Thyroid gland (tissue), 4 donors: ENCODE measurements at regions of chr3 and their contacts with region 1.

Region 1: DNA sequence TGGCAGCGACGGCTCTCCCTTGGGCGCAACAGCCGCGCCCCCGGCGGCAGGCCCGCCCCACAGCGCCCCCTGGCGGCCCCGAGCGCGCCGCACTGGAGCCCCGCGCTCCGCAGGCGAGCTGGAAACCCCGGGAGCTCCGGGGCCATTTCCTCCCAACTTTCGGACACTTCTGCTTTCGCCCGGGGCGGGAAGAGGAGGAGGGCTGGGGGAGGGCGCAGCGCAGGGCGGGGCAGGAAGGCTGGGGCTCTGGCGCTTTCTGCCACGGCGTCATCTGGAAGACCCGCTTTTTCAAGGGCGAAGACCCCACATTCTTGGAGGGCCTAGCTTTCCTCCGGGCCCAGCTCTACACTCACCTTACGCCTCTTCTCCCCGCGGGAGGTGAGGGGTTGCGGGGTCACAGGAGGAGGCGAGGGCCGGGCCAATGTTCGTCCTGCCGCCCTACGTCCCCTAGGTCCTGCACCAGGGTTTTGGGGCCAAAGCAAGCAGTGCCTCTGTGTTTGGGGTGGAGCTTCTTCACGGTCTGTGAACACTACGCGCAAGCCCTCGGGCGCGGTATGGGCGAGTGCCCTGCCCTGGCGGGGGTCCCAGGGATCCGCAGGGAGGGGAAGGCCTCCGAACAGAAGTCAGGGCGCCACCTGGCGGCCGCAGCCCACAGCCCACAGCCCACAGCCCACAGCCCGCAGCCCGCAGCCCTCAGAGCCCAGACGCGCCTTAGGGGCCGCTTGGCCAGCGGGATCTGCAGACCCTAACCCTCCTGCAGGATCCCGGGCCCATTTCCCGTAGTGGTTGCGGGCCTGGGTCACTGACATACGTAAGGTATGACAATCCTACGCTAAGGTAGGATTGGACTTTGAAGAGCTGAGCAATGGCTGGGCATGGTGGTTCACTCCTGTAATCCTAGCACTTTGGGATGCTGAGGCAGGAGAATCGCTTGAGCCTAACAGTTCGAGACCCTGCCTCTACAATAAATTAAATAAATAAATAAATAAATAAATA is 31.1 kb downstream of the FOXL2 start:
- DNase-seq: peak; percentile 98 to 99
- H3K4me3 ChIP-seq: peak overlapping the region in 2 of 3 donors; percentile 20 to 41
- H3K27ac ChIP-seq: peak overlapping the region; percentile 89 to 95 (median 93)
- H3K4me1 ChIP-seq: peaks cover 11 to 22% of the 10 kb centered on the region in 2 donors
- H3K27me3 ChIP-seq: no peaks in the 10 kb centered on the region
- CTCF ChIP-seq: peak; percentile 83 to 96 (median 93)
- POLR2A ChIP-seq: peak in 1 of 2 donors; percentile 70

Region 2: GRCh38 chr3:138455801-138456716 is 459.7 kb before region 1 on chr3:
- intact Hi-C with region 1: no loop called
- DNase-seq: peak; percentile 70 to 78
- H3K4me3 ChIP-seq: no peak overlapping the region
- H3K27ac ChIP-seq: no peak overlapping the region
- H3K4me1 ChIP-seq: peaks cover 0 to 14% of the 10 kb centered on the region in 2 donors
- H3K27me3 ChIP-seq: no peaks in the 10 kb centered on the region
- CTCF ChIP-seq: no peak
- POLR2A ChIP-seq: no peak

Region 3: GRCh38 chr3:138594935-138595610 is 320.7 kb before region 1 on chr3:
- intact Hi-C with region 1: loop called (anchors 5 kb)
- DNase-seq: no peak
- H3K4me3 ChIP-seq: no peak overlapping the region
- H3K27ac ChIP-seq: peak overlapping the region in 1 of 3 donors; percentile 92
- H3K4me1 ChIP-seq: peaks cover 5 to 16% of the 10 kb centered on the region in 2 donors
- H3K27me3 ChIP-seq: no peaks in the 10 kb centered on the region
- CTCF ChIP-seq: no peak
- POLR2A ChIP-seq: no peak

Region 4: DNA sequence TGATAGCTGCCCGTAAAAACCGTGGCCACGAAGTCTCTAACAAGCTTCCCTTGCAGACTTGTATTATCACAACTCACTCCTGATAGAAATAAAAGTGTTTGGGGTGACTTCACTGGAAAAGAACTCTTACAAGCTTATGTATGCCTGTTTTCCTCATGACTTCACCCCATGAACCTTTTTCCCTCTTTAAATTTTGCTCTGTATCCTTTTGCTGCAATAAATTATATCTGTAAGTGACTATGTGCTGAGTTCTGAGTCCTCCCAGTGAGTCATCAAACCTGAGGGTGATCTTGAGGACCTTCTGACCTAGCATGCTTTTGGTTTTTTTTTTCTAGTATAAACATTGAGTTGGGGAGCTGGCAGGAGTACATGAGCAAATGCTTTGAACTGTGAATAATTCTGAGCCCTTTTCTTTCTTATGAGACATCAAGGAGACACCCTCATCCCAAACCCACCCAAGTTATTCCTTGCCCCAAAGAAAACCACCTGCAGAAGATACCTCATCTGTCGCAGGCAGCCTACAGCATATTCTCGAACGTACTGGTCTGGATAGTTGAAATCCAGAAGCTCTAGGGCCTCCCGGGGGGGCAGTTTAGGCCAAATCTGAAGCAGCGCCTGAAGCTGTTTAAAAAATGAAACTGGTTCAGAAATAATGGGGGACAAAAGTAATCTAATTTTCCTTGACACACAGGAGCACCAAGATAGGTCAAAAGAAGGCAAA is 221.4 kb before region 1 on chr3:
- intact Hi-C with region 1: loop called (anchors 5 kb)
- DNase-seq: peak; percentile 36 to 48
- H3K4me3 ChIP-seq: no peak overlapping the region
- H3K27ac ChIP-seq: peak overlapping the region; percentile 77 to 90 (median 82)
- H3K4me1 ChIP-seq: peaks cover 17 to 25% of the 10 kb centered on the region in 2 donors
- H3K27me3 ChIP-seq: no peaks in the 10 kb centered on the region
- CTCF ChIP-seq: no peak
- POLR2A ChIP-seq: no peak

Region 5: DNA sequence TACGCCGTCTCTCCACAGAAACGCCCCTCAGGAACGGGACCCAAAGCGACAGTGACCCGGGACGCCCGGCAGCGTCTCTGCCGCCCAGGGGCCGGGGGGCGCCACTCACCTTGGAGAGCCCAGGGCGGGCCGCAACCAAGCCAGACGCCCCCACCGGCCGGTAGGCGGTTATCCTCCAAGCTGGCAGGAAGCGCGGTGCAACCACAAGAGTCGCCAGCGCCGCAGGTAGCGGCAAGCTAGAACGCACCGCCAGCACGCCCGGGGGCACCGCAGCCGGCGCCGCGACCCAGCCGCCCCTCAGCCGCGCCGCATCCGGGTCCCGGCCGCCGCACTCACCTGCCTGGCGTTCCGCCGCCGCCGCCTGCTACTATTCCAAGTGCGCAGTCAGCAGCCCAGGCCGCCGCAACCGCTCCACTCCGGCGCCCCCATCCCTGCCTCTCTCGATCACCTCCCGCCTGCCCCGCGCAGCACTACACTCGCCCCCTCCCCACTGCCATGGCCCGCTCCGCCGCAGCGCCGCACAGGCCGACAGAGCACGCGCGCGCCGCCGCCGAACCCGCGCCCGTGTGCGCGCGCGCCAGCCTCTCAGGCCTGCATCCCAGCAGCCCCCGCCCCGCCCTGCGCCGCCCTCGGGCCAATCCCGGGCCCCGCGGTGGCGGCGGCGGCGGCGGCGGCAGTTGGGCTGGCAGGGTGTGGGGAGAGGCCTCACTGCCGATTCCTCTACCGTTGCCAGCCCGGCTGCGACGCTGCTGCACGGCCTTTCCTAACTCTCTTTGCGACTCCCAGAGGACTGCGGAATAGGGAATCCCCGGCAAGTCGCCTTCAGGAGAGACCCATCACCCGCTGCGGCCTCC is 81.2 kb before region 1 on chr3 and contains the start of gene PIK3CB:
- intact Hi-C with region 1: loop called (anchors 10 kb)
- DNase-seq: peak; percentile 93 to 94
- H3K4me3 ChIP-seq: peak within 1 kb of the TSS; percentile 41 to 85 (median 70)
- H3K27ac ChIP-seq: peak within 1 kb of the TSS; percentile 88 to 98 (median 95)
- H3K4me1 ChIP-seq: peaks cover 22 to 24% of the 10 kb centered on the region in 2 donors
- H3K27me3 ChIP-seq: no peaks in the 10 kb centered on the region
- CTCF ChIP-seq: peak in 3 of 6 experiments; percentile 4 to 34 (median 30)
- POLR2A ChIP-seq: peak; percentile 45 to 98
- total RNA-seq, gene PIK3CB: 60.2 to 90.0 (median 78.5) TPM

Region 6: DNA sequence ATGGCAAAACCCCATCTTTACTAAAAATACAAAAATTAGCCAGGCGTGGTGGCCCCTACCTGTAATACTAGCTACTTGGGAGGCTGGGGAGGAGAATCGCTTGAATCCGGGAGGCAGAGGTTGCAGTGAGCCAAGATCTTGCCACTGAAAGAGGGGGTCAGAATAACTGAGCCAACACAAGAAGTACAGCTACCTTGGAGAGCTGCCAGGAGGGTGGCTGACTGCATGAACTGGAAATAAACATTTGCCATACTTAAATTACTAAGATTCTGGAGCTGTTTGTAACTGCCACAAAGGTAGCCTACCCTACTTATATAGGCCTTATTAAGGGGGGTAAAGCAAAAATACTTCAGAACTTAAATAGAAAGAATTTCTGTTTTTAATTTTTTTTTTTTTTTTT is 65.7 kb before region 1 on chr3:
- intact Hi-C with region 1: no loop called
- DNase-seq: peak; percentile 66 to 75
- H3K4me3 ChIP-seq: no peak overlapping the region
- H3K27ac ChIP-seq: peak overlapping the region in 2 of 3 donors; percentile 56 to 61
- H3K4me1 ChIP-seq: peaks cover 22 to 28% of the 10 kb centered on the region in 2 donors
- H3K27me3 ChIP-seq: no peaks in the 10 kb centered on the region
- CTCF ChIP-seq: no peak
- POLR2A ChIP-seq: no peak

Region 7: DNA sequence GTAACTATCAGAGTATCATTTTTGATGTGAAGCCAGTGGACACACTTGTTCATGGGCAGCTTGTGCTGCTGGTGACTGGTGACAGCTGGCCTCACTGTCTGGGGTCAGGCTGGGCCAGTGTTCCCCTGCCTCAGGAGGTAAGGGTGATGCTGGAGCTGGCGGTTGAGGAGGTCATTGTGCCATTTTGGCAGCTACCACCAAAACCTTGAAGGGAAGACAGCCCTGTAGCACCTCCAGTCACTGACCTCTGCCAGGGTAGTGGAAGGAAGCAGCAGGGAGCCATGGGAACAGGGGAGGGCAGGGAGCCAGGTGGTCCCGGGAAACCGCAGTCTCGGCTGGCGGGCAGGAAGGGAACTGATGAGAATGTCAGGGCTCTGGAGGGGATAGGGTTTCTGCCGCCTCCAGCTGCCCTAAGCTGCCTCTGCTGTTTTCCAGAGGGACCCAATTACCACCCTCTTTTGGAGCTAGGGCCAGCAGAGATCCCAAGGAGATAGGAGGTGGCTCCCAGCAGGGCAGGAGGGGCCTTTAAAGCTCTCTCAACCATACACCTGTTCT is 56.0 kb after region 1 on chr3:
- intact Hi-C with region 1: no loop called
- DNase-seq: no peak
- H3K4me3 ChIP-seq: no peak overlapping the region
- H3K27ac ChIP-seq: no peak overlapping the region
- H3K4me1 ChIP-seq: no peaks in the 10 kb centered on the region
- H3K27me3 ChIP-seq: no peaks in the 10 kb centered on the region
- CTCF ChIP-seq: no peak
- POLR2A ChIP-seq: no peak